Natural killer cell (primary cell): ENCODE measurements at regions of chr12 and their contacts with region 1.

Region 1: GRCh38 chr12:55142669-55143565 is 16.7 kb downstream of the OR9K2 start:
- DNase-seq: peak in 1 of 2 donors; percentile 71
- ATAC-seq: peak in 1 of 3 donors; percentile 51
- H3K4me3 ChIP-seq: no peak overlapping the region
- H3K4me3 Mint-ChIP-seq: no peak overlapping the region
- H3K27ac ChIP-seq: no peak overlapping the region
- H3K27ac Mint-ChIP-seq: no peak overlapping the region
- H3K4me1 ChIP-seq: no peaks in the 10 kb centered on the region
- H3K4me1 Mint-ChIP-seq: no peaks in the 10 kb centered on the region
- H3K27me3 ChIP-seq: no peaks in the 10 kb centered on the region
- H3K27me3 Mint-ChIP-seq: peaks cover 27 to 37% of the 10 kb centered on the region in 2 donors
- CTCF ChIP-seq: peak; percentile 75

Region 2: DNA sequence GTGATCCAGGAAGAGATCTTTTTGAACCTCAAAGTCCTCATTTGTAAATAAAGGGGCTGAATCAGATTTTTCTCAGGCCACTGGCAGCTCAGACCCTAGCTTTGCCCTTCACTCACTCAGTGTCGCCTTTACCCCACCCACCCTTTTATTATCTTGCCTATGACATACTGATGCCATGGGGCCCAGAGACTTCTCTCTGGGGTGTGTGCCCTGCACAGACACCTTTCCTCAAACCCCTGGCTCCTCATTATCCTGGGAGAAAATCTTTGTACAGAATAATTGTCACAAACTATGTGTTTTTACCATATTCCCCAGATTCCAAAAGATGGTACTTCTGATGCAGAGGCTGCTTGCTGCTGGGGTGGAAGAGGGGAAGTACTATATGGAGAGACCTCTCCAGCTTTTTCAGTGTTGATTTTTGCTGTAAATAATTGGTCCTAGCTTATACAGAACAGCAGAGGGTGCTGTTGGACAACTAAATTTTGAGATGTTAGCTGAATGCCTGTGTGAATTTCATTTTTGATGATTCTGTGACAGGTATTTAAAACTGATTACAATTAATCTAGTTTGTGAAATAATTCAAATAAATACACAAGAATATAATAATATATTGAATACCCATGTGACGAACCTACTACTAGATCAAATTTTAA is 440.9 kb before region 1 on chr12:
- intact Hi-C with region 1: loop called (anchors 5 kb)
- DNase-seq: peak in 1 of 2 donors; percentile 83
- ATAC-seq: peak; percentile 72 to 81 (median 73)
- H3K4me3 ChIP-seq: no peak overlapping the region
- H3K4me3 Mint-ChIP-seq: no peak overlapping the region
- H3K27ac ChIP-seq: no peak overlapping the region
- H3K27ac Mint-ChIP-seq: no peak overlapping the region
- H3K4me1 ChIP-seq: no peaks in the 10 kb centered on the region
- H3K4me1 Mint-ChIP-seq: no peaks in the 10 kb centered on the region
- H3K27me3 ChIP-seq: no peaks in the 10 kb centered on the region
- H3K27me3 Mint-ChIP-seq: peaks cover 18 to 27% of the 10 kb centered on the region in 2 donors
- CTCF ChIP-seq: peak; percentile 73

Region 3: GRCh38 chr12:54749191-54749818 is 393.6 kb before region 1 on chr12:
- intact Hi-C with region 1: loop called (anchors 1 kb)
- DNase-seq: peak in 1 of 2 donors; percentile 86
- ATAC-seq: peak; percentile 82 to 87 (median 85)
- H3K4me3 ChIP-seq: no peak overlapping the region
- H3K4me3 Mint-ChIP-seq: peak overlapping the region; percentile 59
- H3K27ac ChIP-seq: no peak overlapping the region
- H3K27ac Mint-ChIP-seq: no peak overlapping the region
- H3K4me1 ChIP-seq: peaks cover 3% of the 10 kb centered on the region
- H3K4me1 Mint-ChIP-seq: peaks cover 11 to 20% of the 10 kb centered on the region in 2 donors
- H3K27me3 ChIP-seq: no peaks in the 10 kb centered on the region
- H3K27me3 Mint-ChIP-seq: no peaks in the 10 kb centered on the region
- CTCF ChIP-seq: peak; percentile 84

Region 4: DNA sequence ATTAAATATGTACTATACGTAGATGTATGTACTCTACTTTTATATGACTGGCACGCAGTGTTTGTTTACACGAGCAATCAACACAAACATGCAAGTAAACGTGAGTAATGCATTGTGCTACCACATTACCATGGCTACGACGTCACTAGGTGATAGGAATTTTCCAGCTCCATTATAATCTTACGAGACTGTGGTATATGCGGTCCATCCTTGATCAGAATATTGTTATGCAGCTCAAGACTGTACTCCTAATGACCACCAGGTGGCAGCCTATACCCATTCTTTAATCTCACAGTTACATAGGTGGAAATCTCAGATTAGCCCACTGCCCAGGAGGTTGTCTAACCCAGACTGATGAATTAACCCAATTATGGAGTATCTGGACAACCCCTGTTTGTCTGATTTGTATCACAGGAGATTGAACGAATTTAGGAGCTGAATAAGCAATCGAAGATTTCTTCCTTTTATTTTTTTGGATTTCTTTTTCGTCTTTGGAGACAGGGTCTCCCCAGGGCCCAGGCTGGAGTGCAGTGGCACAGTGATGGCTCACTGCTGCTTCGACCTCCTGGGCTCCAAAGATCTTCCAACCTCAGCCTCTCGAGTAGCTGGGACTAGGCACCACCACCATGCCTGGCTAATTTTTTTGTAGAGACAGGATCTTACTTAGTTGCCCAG is 149.6 kb before region 1 on chr12:
- intact Hi-C with region 1: loop called (anchors 1 kb)
- DNase-seq: peak; percentile 37 to 91
- ATAC-seq: peak; percentile 88 to 94 (median 90)
- H3K4me3 ChIP-seq: no peak overlapping the region
- H3K4me3 Mint-ChIP-seq: no peak overlapping the region
- H3K27ac ChIP-seq: no peak overlapping the region
- H3K27ac Mint-ChIP-seq: no peak overlapping the region
- H3K4me1 ChIP-seq: peaks cover 8% of the 10 kb centered on the region
- H3K4me1 Mint-ChIP-seq: peaks cover 23 to 29% of the 10 kb centered on the region in 2 donors
- H3K27me3 ChIP-seq: no peaks in the 10 kb centered on the region
- H3K27me3 Mint-ChIP-seq: peaks cover 6 to 7% of the 10 kb centered on the region in 2 donors
- CTCF ChIP-seq: peak; percentile 97